Calu3 (cell line): ENCODE measurements at regions of chr4 and their contacts with region 1.

Region 1: DNA sequence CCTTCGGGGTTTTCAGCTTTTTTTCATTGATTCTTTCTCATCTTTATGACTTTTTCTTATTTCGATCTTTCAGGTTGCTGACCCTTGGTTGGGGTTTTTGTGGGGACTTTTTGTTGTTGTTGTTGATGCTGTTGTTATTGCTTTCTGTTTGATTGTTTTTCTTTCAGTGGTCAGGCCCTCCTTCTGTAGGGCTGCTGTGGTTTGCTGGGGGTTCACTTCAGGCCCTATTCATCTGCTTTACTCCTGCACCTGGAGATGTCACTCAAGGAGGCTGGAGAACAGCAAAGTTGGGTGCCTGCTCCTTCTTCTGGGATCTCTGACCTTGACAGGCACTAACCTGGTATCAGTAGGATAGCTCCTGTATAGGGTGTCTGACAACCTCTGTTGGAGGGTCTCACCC is 39.9 kb upstream of the PCDH18 start:
- DNase-seq: no peak
- H3K4me3 Mint-ChIP-seq: no peak overlapping the region
- H3K27ac Mint-ChIP-seq: no peak overlapping the region
- H3K4me1 Mint-ChIP-seq: no peaks in the 10 kb centered on the region
- H3K27me3 Mint-ChIP-seq: no peaks in the 10 kb centered on the region
- CTCF ChIP-seq: no peak

Region 2: DNA sequence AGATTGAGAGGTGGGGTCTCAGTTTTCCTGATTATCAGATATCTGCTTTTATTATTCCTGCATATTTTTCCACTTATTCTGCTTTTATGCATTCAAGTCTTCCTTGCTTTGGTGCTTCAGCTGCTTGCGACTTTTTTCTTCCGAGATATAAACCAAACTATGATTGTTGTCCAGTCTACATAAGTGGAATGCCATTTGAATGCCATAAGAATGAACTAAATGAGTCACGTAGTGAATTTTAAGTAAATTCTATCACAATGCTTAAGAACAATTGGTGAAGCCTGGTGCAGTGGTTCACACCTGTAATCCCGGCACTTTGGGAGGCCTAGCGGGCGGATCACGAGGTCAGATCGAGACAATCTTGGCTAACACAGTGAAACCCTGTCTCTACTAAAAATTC is 228.9 kb before region 1 on chr4:
- CTCF ChIA-PET with region 1: no interaction called
- intact Hi-C with region 1: no loop called
- DNase-seq: no peak
- H3K4me3 Mint-ChIP-seq: no peak overlapping the region
- H3K27ac Mint-ChIP-seq: no peak overlapping the region
- H3K4me1 Mint-ChIP-seq: no peaks in the 10 kb centered on the region
- H3K27me3 Mint-ChIP-seq: no peaks in the 10 kb centered on the region
- CTCF ChIP-seq: no peak

Region 3: DNA sequence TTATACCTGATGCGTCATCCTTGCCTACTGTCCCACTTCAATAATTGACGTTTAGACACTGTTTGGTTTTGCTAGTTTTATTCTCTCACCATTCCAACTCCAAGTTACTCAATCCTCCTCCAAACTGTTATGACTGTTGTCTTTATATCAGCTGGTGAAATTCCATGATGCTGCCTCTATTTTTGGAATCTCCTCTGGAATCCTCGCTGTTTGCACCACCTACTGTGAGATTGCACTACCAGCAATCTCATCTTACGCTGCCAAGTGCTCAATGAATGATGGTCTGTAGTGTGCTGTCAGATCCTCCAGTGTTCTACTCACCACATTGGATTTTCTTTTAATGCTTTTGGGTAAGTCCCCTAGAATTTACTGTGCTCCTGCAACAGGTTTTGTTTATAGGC is 26.7 kb before region 1 on chr4:
- CTCF ChIA-PET with region 1: interaction called, 10 read pairs
- intact Hi-C with region 1: no loop called
- DNase-seq: no peak
- H3K4me3 Mint-ChIP-seq: no peak overlapping the region
- H3K27ac Mint-ChIP-seq: no peak overlapping the region
- H3K4me1 Mint-ChIP-seq: no peaks in the 10 kb centered on the region
- H3K27me3 Mint-ChIP-seq: no peaks in the 10 kb centered on the region
- CTCF ChIP-seq: no peak

Region 4: DNA sequence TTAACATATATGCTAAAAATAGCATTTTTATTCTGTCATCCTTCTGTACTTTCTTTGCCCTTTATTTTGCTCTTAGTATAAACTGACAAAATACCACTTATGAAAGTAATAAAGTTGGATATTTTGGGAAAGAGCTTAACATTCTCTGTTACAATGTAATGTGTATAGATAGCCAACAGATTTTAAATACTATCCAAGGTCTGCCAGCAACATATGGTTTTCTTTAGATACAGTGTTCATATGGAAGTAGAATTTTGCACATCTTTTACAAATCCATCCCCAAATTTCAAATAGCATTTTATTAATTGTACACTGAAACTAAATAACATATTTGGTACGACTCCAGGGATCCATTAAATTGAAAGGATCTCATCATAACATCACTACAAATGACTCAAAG is 228.7 kb after region 1 on chr4:
- CTCF ChIA-PET with region 1: no interaction called
- intact Hi-C with region 1: no loop called
- DNase-seq: no peak
- H3K4me3 Mint-ChIP-seq: no peak overlapping the region
- H3K27ac Mint-ChIP-seq: no peak overlapping the region
- H3K4me1 Mint-ChIP-seq: no peaks in the 10 kb centered on the region
- H3K27me3 Mint-ChIP-seq: no peaks in the 10 kb centered on the region
- CTCF ChIP-seq: no peak